ENCODE measurements at regions of chr15 and their contacts with region 1.

Region 1: GRCh38 chr15:34223904-34224596 is 766 bp upstream of the EMC4 start:
- DNase-seq: no peak
- H3K4me3 ChIP-seq: peak overlapping the region; percentile 80
- H3K27ac ChIP-seq: peak overlapping the region; percentile 94
- H3K4me1 ChIP-seq: peaks cover 34% of the 10 kb centered on the region
- H3K27me3 ChIP-seq: no peaks in the 10 kb centered on the region
- CTCF ChIP-seq: no peak

Region 2: GRCh38 chr15:34101366-34102175 is 122.5 kb before region 1 on chr15 and contains the starts of genes EMC7 and PGBD4:
- intact Hi-C with region 1: loop called (anchors 10 kb)
- DNase-seq: peak; percentile 99
- H3K4me3 ChIP-seq: peak within 1 kb of the TSS; percentile 72
- H3K27ac ChIP-seq: peak within 1 kb of the TSS; percentile 91
- H3K4me1 ChIP-seq: peaks cover 37% of the 10 kb centered on the region
- H3K27me3 ChIP-seq: no peaks in the 10 kb centered on the region
- CTCF ChIP-seq: no peak
- total RNA-seq, gene EMC7: 56.5 TPM
- total RNA-seq, gene PGBD4: 2.0 TPM

Region 3: GRCh38 chr15:34297059-34297458 is 73.0 kb after region 1 on chr15:
- intact Hi-C with region 1: no loop called
- DNase-seq: no peak
- H3K4me3 ChIP-seq: peak overlapping the region; percentile 5
- H3K27ac ChIP-seq: peak overlapping the region; percentile 74
- H3K4me1 ChIP-seq: peaks cover 34% of the 10 kb centered on the region
- H3K27me3 ChIP-seq: no peaks in the 10 kb centered on the region
- CTCF ChIP-seq: no peak